ENCODE measurements at regions of chr14 and their contacts with region 1.

Region 1: DNA sequence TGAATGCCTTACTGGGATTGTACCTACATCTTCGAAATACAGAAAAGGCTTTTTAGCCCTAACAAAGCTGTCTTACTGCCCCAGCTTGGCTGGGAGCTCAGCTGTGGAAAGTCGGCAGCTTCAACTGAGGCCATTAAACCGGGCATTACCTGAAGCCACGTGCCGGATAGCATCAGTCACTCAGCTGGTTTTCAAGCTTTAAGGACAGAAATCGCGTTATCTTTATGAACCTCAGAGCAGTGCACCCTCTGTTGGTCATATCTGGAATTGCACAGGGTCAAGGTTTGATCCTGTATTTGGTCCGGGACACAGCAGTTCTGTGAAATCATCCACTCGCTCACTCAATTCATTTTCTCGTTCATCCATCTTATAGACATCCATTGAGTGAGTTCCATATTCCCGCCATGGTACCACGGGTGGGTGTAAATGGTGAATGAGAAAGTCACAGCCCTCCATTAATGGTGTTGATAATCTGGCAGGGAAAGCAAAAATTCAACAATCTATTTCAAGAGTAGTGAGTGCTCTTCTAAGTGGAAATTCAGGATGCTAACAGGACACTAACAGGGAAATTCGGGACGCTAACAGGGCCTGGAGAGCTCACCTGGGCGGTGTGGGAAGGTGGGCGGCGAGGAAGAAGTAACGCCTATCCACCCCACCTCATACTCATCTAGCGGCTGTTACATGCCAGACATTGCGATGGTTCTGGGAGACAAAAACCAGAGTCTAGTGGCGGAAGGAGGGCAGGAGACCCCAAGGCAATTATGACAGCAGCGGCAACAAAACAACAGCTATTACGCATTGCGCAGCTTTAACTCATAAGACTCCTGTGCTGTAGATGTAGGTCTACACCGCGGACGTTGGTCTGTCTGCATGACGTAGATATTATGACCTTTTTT is 60.6 kb upstream of the TCL1A start:
- DNase-seq: peak; percentile 55
- H3K4me3 ChIP-seq: no peak overlapping the region
- H3K27ac ChIP-seq: no peak overlapping the region
- H3K4me1 ChIP-seq: no peaks in the 10 kb centered on the region
- H3K27me3 ChIP-seq: no peaks in the 10 kb centered on the region
- CTCF ChIP-seq: peak; percentile 76 to 85
- POLR2A ChIP-seq: no peak

Region 2: DNA sequence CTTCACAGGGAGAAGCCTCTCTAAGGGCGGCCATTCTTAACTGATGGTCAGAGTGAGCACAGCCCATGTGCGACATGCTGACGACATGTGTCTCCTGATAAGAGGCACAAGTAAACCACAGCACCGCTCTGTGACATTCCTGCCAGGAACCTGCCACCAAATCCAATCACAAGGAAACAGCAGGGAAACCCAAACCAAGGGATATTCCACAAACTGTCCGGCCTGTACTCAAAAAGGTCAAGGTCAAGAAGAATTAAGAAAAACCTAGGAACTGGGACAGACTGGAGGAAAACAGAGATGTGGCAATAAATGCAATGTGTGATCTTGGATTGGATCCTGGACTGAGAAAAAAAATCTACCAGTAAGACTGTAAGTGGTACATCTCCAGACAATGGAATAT is 350.0 kb before region 1 on chr14:
- CTCF ChIA-PET with region 1: interaction called, 8 read pairs
- POLR2A ChIA-PET with region 1: no interaction called
- dilution Hi-C with region 1: no loop called
- intact Hi-C with region 1: loop called (anchors 2 kb)
- DNase-seq: no peak
- H3K4me3 ChIP-seq: no peak overlapping the region
- H3K27ac ChIP-seq: no peak overlapping the region
- H3K4me1 ChIP-seq: no peaks in the 10 kb centered on the region
- H3K27me3 ChIP-seq: no peaks in the 10 kb centered on the region
- CTCF ChIP-seq: no peak
- POLR2A ChIP-seq: no peak

Region 3: DNA sequence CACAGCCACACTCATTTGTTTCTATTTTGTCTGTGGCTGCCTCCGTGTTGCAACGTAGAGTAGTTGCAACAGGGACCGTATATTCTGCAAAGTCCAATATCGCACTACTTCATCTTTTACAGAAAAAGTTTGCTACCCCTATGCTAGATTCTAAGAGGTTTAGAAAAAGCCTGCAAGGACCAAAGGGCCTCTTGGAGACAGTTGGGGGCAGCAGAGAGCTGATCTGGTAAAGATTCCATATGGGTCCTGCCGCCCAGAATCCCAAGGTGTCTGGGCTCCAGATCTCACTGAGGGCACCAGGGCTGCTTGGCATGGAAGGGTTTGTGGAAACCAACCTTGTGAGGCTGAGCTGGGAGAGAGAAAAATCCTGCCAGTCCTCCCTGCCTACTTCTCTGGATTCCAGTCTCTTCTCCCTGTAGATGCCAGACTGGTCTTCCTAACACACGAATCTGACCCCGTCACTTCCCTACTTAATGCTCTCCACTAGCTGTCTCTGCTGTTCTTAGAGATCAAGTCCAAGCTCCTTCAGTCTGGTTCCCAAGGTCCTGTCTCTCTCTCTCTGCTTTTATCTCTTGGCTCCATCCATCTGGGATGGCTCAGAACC is 165.0 kb before region 1 on chr14:
- CTCF ChIA-PET with region 1: interaction called, 27 read pairs
- POLR2A ChIA-PET with region 1: no interaction called
- dilution Hi-C with region 1: no loop called
- intact Hi-C with region 1: loop called (anchors 1 kb)
- DNase-seq: peak; percentile 29
- H3K4me3 ChIP-seq: no peak overlapping the region
- H3K27ac ChIP-seq: no peak overlapping the region
- H3K4me1 ChIP-seq: no peaks in the 10 kb centered on the region
- H3K27me3 ChIP-seq: no peaks in the 10 kb centered on the region
- CTCF ChIP-seq: peak; percentile 43 to 64
- POLR2A ChIP-seq: no peak

Region 4: GRCh38 chr14:95814363-95815225 is 40.1 kb after region 1 on chr14:
- CTCF ChIA-PET with region 1: no interaction called
- POLR2A ChIA-PET with region 1: no interaction called
- dilution Hi-C with region 1: no loop called
- intact Hi-C with region 1: no loop called
- DNase-seq: no peak
- H3K4me3 ChIP-seq: no peak overlapping the region
- H3K27ac ChIP-seq: no peak overlapping the region
- H3K4me1 ChIP-seq: no peaks in the 10 kb centered on the region
- H3K27me3 ChIP-seq: no peaks in the 10 kb centered on the region
- CTCF ChIP-seq: no peak
- POLR2A ChIP-seq: no peak

Region 5: GRCh38 chr14:96002498-96002884 is 228.0 kb after region 1 on chr14:
- CTCF ChIA-PET with region 1: no interaction called
- POLR2A ChIA-PET with region 1: no interaction called
- dilution Hi-C with region 1: no loop called
- intact Hi-C with region 1: no loop called
- DNase-seq: no peak
- H3K4me3 ChIP-seq: no peak overlapping the region
- H3K27ac ChIP-seq: no peak overlapping the region
- H3K4me1 ChIP-seq: no peaks in the 10 kb centered on the region
- H3K27me3 ChIP-seq: no peaks in the 10 kb centered on the region
- CTCF ChIP-seq: no peak
- POLR2A ChIP-seq: no peak

Measured in endothelial cell of umbilical vein (primary cell).